ENCODE measurements at regions of chr9 and their contacts with region 1.

Region 1: DNA sequence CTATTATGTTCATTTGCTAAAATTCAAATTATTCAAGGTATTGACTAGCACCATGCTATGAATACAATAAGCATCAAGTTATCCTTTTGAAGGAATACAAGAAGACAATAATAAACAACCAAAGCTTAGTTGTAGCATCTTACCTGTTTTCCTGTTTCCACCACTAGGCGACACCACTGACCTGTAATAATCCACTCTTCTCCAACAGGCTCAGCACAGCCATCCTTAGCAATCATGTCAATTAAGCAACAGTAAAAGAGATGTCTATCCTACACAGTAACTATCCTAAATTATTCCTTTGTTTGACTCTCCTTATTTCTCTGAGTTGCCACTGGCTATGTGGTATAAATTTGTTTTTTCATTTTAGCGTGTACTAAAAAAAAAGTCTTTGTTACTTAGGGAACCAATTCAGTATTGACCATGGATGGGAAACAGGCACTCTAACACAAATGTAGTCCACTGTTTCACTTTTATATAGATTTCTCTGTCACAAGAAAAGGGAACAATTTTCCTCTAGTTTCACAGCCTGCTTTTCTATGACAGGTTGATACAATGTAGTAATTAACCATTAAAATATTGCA is 46.2 kb downstream of the PCA3 start:
- DNase-seq: no peak
- H3K4me3 ChIP-seq: no peak overlapping the region
- H3K27ac ChIP-seq: no peak overlapping the region
- H3K4me1 ChIP-seq: no peaks in the 10 kb centered on the region
- H3K27me3 ChIP-seq: peaks cover 81% of the 10 kb centered on the region
- CTCF ChIP-seq: peak; percentile 79

Region 2: DNA sequence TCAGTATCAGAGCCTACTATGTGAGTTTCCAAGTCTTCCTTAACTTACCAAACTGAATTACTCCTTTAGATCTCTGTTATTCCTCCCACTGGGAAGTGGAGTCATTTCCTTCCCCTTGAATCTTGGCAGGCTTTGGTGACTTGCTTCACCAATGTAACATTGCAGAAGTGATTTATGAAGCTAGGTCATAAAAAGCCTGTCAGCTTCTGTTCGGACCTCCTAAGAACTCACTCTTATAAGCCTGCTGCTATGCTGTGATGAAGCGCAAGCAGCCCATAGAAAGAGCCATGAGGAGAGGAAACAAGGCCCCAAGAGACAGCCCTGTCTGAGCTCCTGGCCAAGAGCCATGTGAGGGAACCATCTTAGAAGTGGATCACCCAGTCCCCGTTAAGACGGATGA is 194.7 kb after region 1 on chr9:
- intact Hi-C with region 1: loop called (anchors 5 kb)
- DNase-seq: no peak
- H3K4me3 ChIP-seq: no peak overlapping the region
- H3K27ac ChIP-seq: no peak overlapping the region
- H3K4me1 ChIP-seq: no peaks in the 10 kb centered on the region
- H3K27me3 ChIP-seq: peaks cover 87% of the 10 kb centered on the region
- CTCF ChIP-seq: no peak

Region 3: GRCh38 chr9:77142366-77142765 is 331.9 kb after region 1 on chr9:
- intact Hi-C with region 1: loop called (anchors 10 kb)
- DNase-seq: no peak
- H3K4me3 ChIP-seq: no peak overlapping the region
- H3K27ac ChIP-seq: no peak overlapping the region
- H3K4me1 ChIP-seq: no peaks in the 10 kb centered on the region
- H3K27me3 ChIP-seq: peaks cover 16% of the 10 kb centered on the region
- CTCF ChIP-seq: no peak